PC-9 (cell line): ENCODE measurements at regions of chr20 and their contacts with region 1.

Region 1: GRCh38 chr20:44217342-44218092 is 6.9 kb upstream of the OSER1 start:
- DNase-seq: peak; percentile 58 to 76
- H3K4me3 ChIP-seq: no peak overlapping the region
- H3K27ac ChIP-seq: no peak overlapping the region
- H3K4me1 ChIP-seq: no peaks in the 10 kb centered on the region; the same call in 1 of the 2 replicates
- H3K27me3 ChIP-seq: no peaks in the 10 kb centered on the region
- CTCF ChIP-seq: peak; percentile 98

Region 2: DNA sequence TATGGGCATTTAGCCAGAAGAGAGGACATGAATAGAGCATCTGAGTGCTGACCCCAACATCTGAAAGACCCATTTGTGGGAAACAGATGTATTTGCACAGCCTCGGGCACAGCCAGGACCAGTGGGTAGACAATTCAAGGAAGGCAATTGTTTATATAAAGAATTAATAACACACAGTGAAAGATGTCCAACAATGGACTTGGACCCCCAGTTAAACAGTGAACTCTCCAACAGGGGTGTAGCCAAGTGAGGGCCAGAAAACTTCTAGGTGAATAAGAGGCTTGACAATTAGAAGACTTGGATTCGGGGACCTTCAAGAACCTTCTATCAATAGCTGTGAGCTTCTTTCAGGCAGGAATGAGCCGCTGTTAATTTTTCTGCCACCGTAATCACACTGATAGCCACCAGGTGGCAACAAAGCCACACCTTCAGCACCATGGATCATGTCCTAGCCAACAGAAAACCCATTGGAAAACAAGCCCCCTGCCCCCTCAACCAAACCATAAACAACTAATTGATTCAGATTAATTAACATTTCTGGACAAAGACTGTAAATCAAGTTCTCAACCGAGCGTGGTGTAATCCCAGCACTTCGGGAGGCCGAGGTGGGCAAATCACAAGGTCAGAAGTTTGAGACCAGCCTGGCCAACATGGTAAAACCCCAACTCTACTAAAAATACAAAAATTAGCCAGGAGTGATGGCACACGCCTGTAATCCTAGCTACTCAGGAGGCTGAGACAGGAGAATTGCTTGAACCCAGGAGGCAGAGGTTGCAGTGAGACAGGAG is 768.6 kb before region 1 on chr20:
- CTCF ChIA-PET with region 1: no interaction called
- POLR2A ChIA-PET with region 1: no interaction called
- intact Hi-C with region 1: loop called (anchors 5 kb)
- DNase-seq: peak in 1 of 2 experiments; percentile 59
- H3K4me3 ChIP-seq: no peak overlapping the region
- H3K27ac ChIP-seq: no peak overlapping the region
- H3K4me1 ChIP-seq: no peaks in the 10 kb centered on the region
- H3K27me3 ChIP-seq: peaks cover 5% of the 10 kb centered on the region
- CTCF ChIP-seq: peak; percentile 92

Region 3: DNA sequence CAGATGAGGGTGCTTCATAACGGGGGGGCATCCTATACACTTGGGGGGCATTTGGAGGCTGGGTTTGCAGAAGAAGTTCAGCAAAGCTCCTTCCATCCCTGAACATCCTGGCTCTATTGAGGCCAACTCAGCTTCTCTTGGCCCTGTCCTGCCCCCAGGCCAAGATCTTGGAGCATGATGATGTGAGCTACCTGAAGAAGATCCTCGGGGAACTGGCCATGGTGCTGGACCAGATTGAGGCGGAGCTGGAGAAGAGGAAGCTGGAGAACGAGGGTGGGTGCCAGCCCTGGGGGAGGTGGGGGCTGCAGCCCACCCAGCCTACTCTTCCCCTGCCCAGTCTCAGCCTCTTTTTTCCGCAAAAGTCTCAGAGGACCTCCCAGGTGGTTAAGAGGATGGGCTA is 46.8 kb after region 1 on chr20:
- CTCF ChIA-PET with region 1: no interaction called
- POLR2A ChIA-PET with region 1: interaction called, 34 read pairs
- intact Hi-C with region 1: no loop called
- DNase-seq: no peak
- H3K4me3 ChIP-seq: no peak overlapping the region
- H3K27ac ChIP-seq: no peak overlapping the region
- H3K4me1 ChIP-seq: no peaks in the 10 kb centered on the region
- H3K27me3 ChIP-seq: peaks cover 57% of the 10 kb centered on the region; the same call in 1 of the 2 replicates
- CTCF ChIP-seq: no peak

Region 4: DNA sequence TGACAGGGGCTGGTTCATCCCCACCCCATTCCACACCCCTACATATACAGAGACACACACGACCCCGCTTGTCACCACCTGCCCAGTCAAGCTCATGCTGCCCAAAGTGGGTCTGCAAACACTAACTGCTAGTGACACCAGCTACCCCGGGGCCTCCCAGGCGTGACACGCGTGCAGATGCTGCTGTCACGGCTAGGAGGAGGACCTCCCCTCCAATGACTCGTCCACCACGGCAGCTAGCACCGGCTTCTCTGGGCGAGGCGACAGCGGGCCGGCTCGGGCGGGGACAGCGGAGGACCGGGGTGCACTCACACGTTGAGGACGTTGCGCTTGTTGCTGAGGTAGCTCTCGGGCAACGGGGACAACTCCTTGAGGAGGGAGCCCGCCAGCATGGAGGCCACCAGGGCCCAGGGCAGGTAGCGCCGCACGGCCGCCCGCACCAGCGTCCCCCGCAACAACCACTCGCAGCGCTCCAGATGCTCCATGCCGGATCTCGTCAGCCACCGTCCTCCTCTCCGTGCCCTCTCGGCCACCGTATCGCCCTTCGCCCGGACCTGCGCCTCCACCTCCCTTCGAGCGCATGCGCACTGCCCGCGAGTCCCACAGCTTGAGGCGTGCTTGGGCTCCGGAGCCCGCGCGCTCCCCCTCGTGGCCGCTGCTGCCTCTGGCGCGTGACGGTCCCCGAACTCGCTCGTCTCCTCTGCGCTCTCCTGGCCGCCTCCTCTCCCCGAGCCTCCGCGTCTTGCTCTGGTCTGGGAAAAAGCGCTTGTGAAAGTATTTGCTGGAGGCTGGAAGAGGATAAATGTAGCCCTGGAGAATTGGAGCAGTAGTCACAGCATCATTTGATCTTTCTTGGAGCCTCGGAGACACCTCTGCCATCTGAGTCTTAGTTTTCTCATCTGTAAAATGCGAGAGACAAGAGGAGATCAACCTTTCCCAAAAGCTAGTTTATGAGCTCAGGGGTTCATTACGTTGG is 93.4 kb after region 1 on chr20 and contains the start of gene FITM2:
- CTCF ChIA-PET with region 1: interaction called, 28 read pairs
- POLR2A ChIA-PET with region 1: no interaction called
- intact Hi-C with region 1: loop called (anchors 1 kb)
- DNase-seq: peak; percentile 86 to 98
- H3K4me3 ChIP-seq: peak within 1 kb of the TSS; percentile 69
- H3K27ac ChIP-seq: no peak within 1 kb of the TSS
- H3K4me1 ChIP-seq: peaks cover 10% of the 10 kb centered on the region
- H3K27me3 ChIP-seq: no peaks in the 10 kb centered on the region
- CTCF ChIP-seq: peak; percentile 94
- total RNA-seq, gene FITM2: 6.1 and 7.4 TPM in 2 replicates

Region 5: DNA sequence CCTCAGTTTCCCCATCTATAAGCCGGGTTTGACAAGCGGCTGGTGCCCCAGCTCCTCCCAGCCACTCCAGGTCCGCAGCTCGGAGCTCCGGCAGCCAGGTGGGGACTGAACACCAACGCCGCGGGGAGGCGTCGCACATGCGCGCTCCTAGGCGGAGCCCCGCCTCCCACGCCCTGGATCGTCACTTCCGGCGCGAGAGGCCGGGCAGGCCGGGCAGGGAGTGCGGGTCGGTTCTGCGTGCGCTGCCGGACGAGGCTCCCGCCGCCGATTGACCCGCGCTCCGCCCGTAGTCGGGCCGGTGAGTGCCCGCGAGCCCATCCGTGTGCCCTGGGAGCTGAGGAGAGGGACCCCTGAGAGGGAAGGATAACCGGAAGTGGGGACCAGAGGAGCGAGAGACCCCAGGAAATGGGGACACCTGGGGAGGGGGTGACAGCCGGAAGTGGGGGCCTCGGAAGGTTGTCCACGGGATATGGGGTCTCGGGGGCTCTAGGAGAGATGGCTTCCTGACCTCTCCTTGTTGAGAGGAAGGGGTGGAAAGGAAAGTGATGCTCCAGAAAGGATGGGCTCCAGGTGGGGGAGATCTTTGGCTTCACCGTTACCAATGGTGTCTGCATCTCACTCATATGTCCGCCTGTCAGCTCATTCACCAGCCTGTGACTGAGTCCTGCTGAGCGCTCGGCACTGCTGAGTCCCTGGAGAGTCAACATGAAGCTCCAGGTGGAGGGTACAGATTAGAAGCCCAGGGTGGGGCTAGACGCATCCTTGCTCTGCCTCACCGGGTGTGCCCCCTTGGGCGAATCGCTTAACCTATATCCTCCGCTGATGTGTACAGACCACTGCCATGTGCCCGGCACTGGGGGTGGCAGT is 258.4 kb after region 1 on chr20 and contains the start of gene TTPAL:
- CTCF ChIA-PET with region 1: interaction called, 6 read pairs
- POLR2A ChIA-PET with region 1: no interaction called
- intact Hi-C with region 1: loop called (anchors 1 kb)
- DNase-seq: peak; percentile 77 to 93
- H3K4me3 ChIP-seq: peak within 1 kb of the TSS; percentile 88
- H3K27ac ChIP-seq: peak within 1 kb of the TSS; percentile 37
- H3K4me1 ChIP-seq: peaks cover 22% of the 10 kb centered on the region
- H3K27me3 ChIP-seq: no peaks in the 10 kb centered on the region
- CTCF ChIP-seq: peak; percentile 31; the same call in 1 of the 2 replicates
- total RNA-seq, gene TTPAL: 28.5 and 31.3 TPM in 2 replicates

Region 6: GRCh38 chr20:44582311-44583025 is 365.0 kb after region 1 on chr20 and contains the start of gene PKIG:
- CTCF ChIA-PET with region 1: no interaction called
- POLR2A ChIA-PET with region 1: no interaction called
- intact Hi-C with region 1: no loop called
- DNase-seq: no peak
- H3K4me3 ChIP-seq: no peak within 1 kb of the TSS
- H3K27ac ChIP-seq: no peak within 1 kb of the TSS
- H3K4me1 ChIP-seq: 0 out of 2 replicates have a peak, but pooled peaks cover 4% of the 10 kb centered on the region
- H3K27me3 ChIP-seq: no peaks in the 10 kb centered on the region
- CTCF ChIP-seq: no peak
- total RNA-seq, gene PKIG: 41.9 and 50.1 TPM in 2 replicates

Region 7: GRCh38 chr20:44609511-44610312 is 392.2 kb after region 1 on chr20:
- CTCF ChIA-PET with region 1: interaction called, 3 read pairs
- POLR2A ChIA-PET with region 1: no interaction called
- intact Hi-C with region 1: loop called (anchors 1 kb)
- DNase-seq: peak; percentile 85 to 91
- H3K4me3 ChIP-seq: no peak overlapping the region
- H3K27ac ChIP-seq: 0 out of 2 replicates have a peak overlapping the region, but pooled peaks have one; percentile 0
- H3K4me1 ChIP-seq: peaks cover 7% of the 10 kb centered on the region
- H3K27me3 ChIP-seq: no peaks in the 10 kb centered on the region
- CTCF ChIP-seq: peak; percentile 99

Region 8: DNA sequence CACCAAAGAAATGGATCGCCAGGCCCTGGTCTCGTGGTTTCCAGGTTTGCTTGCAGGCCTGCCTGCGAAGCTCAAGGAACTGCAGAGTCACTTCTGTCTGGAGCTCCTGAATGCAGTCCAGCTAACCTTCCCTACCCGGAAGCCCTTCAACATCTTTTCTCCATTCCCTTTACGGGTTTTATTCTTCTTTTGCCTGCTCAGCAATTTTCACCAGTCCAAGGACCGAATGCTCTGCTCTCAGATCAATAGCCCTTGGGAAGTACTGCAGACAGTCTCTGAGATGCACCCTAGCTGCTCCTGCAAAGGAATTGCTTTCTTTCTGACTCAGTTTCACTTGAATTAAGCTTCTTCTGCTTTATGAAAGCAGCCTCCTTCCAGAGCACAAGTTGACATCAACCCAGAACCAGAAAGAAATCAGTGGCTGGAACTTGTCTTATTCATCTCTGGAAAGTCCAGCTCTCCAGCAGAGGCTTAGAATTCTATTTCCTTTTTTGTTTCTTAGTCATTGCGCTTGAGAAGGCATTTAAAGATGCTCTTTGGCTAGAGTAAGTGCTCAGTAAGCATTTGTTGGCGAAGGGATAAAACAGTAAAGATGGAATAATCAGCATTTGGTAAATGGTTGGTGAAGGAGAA is 649.3 kb after region 1 on chr20:
- CTCF ChIA-PET with region 1: no interaction called
- POLR2A ChIA-PET with region 1: no interaction called
- intact Hi-C with region 1: loop called (anchors 2 kb)
- DNase-seq: no peak
- H3K4me3 ChIP-seq: no peak overlapping the region
- H3K27ac ChIP-seq: no peak overlapping the region
- H3K4me1 ChIP-seq: no peaks in the 10 kb centered on the region
- H3K27me3 ChIP-seq: 0 out of 2 replicates have a peak, but pooled peaks cover 17% of the 10 kb centered on the region
- CTCF ChIP-seq: no peak